H1 (cell line): ENCODE measurements at regions of chr7 and their contacts with region 1.

Region 1: GRCh38 chr7:38335492-38336147 is 62.2 kb upstream of the TARP start:
- DNase-seq: peak; percentile 83 to 91
- H3K4me3 ChIP-seq: no peak overlapping the region
- H3K27ac ChIP-seq: no peak overlapping the region
- H3K4me1 ChIP-seq: peaks cover 0 to 12% (median 7%) of the 10 kb centered on the region in 4 experiments; a peak in 5 of 7 replicates
- H3K27me3 ChIP-seq: no peaks in the 10 kb centered on the region
- CTCF ChIP-seq: peak; percentile 96 to 100 (median 99)
- EP300 ChIP-seq: peak in 1 of 2 experiments; percentile 43; a peak in 1 of 3 replicates
- POLR2A ChIP-seq: peak in 1 of 2 experiments; percentile 34; a peak in 1 of 3 replicates
- RAD21 ChIP-seq: peak; percentile 69 to 83

Region 2: DNA sequence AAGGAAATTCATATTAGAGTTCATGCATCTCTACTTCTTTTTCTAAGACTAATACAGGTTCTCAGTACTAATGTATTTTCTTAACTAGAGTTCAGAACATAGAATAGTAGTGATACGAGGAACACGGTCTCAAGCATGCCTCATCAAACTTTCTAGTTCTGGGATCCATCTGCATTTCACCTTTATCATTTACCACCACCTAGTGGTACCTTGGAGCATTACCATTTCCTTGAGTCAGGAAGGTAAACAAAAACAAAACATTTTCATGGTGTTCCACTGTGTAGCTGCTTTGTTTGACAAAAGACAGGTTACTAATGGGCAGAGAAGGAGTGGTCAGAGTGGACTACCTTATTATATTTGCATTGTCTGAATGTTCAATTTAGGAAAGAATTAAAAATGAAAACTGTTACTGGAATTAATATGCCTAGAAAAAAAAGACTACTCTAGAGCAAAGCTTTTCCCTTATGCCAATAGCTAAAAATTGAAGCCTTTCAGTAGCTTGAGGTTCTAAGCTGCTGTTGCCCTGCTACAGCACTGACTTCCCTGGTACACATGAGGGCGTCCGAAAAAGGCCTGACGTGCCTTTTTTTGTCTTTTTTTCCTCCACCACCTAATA is 113.0 kb before region 1 on chr7:
- CTCF ChIA-PET with region 1: interaction called, 30 read pairs
- POLR2A ChIA-PET with region 1: no interaction called
- DNase-seq: no peak
- H3K4me3 ChIP-seq: no peak overlapping the region
- H3K27ac ChIP-seq: no peak overlapping the region
- H3K4me1 ChIP-seq: no peaks in the 10 kb centered on the region
- H3K27me3 ChIP-seq: no peaks in the 10 kb centered on the region
- CTCF ChIP-seq: peak in 2 of 3 experiments; percentile 77 to 80; a peak in 3 of 4 replicates
- EP300 ChIP-seq: no peak
- POLR2A ChIP-seq: no peak
- RAD21 ChIP-seq: peak; percentile 87 to 88

Region 3: GRCh38 chr7:38311329-38311937 is 24.2 kb before region 1 on chr7:
- CTCF ChIA-PET with region 1: interaction called, 64 read pairs
- POLR2A ChIA-PET with region 1: interaction called, 3 read pairs
- DNase-seq: no peak
- H3K4me3 ChIP-seq: no peak overlapping the region
- H3K27ac ChIP-seq: no peak overlapping the region
- H3K4me1 ChIP-seq: no peaks in the 10 kb centered on the region
- H3K27me3 ChIP-seq: no peaks in the 10 kb centered on the region
- CTCF ChIP-seq: no peak
- EP300 ChIP-seq: no peak
- POLR2A ChIP-seq: no peak
- RAD21 ChIP-seq: no peak

Region 4: GRCh38 chr7:38351601-38352000 is 16.0 kb after region 1 on chr7:
- CTCF ChIA-PET with region 1: interaction called, 51 read pairs
- POLR2A ChIA-PET with region 1: interaction called, 3 read pairs
- DNase-seq: no peak
- H3K4me3 ChIP-seq: no peak overlapping the region
- H3K27ac ChIP-seq: no peak overlapping the region
- H3K4me1 ChIP-seq: no peaks in the 10 kb centered on the region
- H3K27me3 ChIP-seq: no peaks in the 10 kb centered on the region
- CTCF ChIP-seq: no peak
- EP300 ChIP-seq: no peak
- POLR2A ChIP-seq: no peak
- RAD21 ChIP-seq: no peak

Region 5: DNA sequence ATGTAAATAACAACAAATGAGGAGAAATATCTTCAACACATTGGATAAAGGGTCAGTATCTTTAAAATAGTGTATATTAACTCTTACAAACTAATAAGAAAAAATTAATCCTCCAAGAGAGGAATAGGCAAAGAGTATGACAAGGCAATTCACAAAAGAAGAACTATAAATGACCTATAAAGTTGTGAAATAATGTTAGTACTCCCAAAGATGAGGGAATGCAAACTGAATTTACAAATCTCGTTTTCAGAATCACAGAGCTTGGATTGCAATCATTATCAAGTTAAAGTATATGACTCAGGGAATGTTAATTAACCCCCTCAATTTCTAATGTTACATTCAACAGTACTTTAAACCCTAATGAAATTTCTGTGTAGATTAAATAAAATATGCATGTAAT is 25.2 kb after region 1 on chr7:
- CTCF ChIA-PET with region 1: interaction called, 10 read pairs
- POLR2A ChIA-PET with region 1: no interaction called
- DNase-seq: no peak
- H3K4me3 ChIP-seq: no peak overlapping the region
- H3K27ac ChIP-seq: no peak overlapping the region
- H3K4me1 ChIP-seq: no peaks in the 10 kb centered on the region
- H3K27me3 ChIP-seq: no peaks in the 10 kb centered on the region
- CTCF ChIP-seq: no peak
- EP300 ChIP-seq: no peak
- POLR2A ChIP-seq: no peak
- RAD21 ChIP-seq: no peak

Region 6: GRCh38 chr7:38411404-38411803 is 75.8 kb after region 1 on chr7:
- CTCF ChIA-PET with region 1: no interaction called
- POLR2A ChIA-PET with region 1: no interaction called
- DNase-seq: no peak
- H3K4me3 ChIP-seq: no peak overlapping the region
- H3K27ac ChIP-seq: no peak overlapping the region
- H3K4me1 ChIP-seq: peaks cover 0 to 2% (median 0%) of the 10 kb centered on the region in 4 experiments; a peak in 1 of 7 replicates
- H3K27me3 ChIP-seq: no peaks in the 10 kb centered on the region
- CTCF ChIP-seq: peak in 2 of 3 experiments; percentile 55 to 68; a peak in 2 of 4 replicates
- EP300 ChIP-seq: no peak
- POLR2A ChIP-seq: no peak
- RAD21 ChIP-seq: peak; percentile 29 to 35